ENCODE measurements at regions of chr18 and their contacts with region 1.

Region 1: GRCh38 chr18:35972197-35973052 is at the start of gene RMP24:
- DNase-seq: peak; percentile 85
- ATAC-seq: peak; percentile 94
- H3K4me3 Mint-ChIP-seq: peak within 1 kb of the TSS; percentile 98
- H3K27ac Mint-ChIP-seq: peak within 1 kb of the TSS; percentile 97
- H3K4me1 Mint-ChIP-seq: peaks cover 50% of the 10 kb centered on the region
- H3K27me3 Mint-ChIP-seq: no peaks in the 10 kb centered on the region
- CTCF ChIP-seq: no peak

Region 2: GRCh38 chr18:34976899-34977837 is 995.3 kb before region 1 on chr18:
- CTCF ChIA-PET with region 1: no interaction called
- POLR2A ChIA-PET with region 1: no interaction called
- intact Hi-C with region 1: loop called (anchors 5 kb)
- DNase-seq: peak; percentile 77
- ATAC-seq: peak; percentile 76
- H3K4me3 Mint-ChIP-seq: peak overlapping the region; percentile 89
- H3K27ac Mint-ChIP-seq: no peak overlapping the region
- H3K4me1 Mint-ChIP-seq: peaks cover 23% of the 10 kb centered on the region
- H3K27me3 Mint-ChIP-seq: peaks cover 18% of the 10 kb centered on the region
- CTCF ChIP-seq: no peak

Region 3: GRCh38 chr18:35290073-35290735 is 682.2 kb before region 1 on chr18 and contains the start of gene ZSCAN30:
- CTCF ChIA-PET with region 1: no interaction called
- POLR2A ChIA-PET with region 1: interaction called, 5 read pairs
- intact Hi-C with region 1: loop called (anchors 1 kb)
- DNase-seq: peak; percentile 92
- ATAC-seq: peak; percentile 97
- H3K4me3 Mint-ChIP-seq: peak within 1 kb of the TSS; percentile 100
- H3K27ac Mint-ChIP-seq: peak within 1 kb of the TSS; percentile 99
- H3K4me1 Mint-ChIP-seq: peaks cover 51% of the 10 kb centered on the region
- H3K27me3 Mint-ChIP-seq: peaks cover 2% of the 10 kb centered on the region
- CTCF ChIP-seq: no peak
- total RNA-seq, gene ZSCAN30: 21.2 and 23.8 TPM in 2 replicates

Region 4: DNA sequence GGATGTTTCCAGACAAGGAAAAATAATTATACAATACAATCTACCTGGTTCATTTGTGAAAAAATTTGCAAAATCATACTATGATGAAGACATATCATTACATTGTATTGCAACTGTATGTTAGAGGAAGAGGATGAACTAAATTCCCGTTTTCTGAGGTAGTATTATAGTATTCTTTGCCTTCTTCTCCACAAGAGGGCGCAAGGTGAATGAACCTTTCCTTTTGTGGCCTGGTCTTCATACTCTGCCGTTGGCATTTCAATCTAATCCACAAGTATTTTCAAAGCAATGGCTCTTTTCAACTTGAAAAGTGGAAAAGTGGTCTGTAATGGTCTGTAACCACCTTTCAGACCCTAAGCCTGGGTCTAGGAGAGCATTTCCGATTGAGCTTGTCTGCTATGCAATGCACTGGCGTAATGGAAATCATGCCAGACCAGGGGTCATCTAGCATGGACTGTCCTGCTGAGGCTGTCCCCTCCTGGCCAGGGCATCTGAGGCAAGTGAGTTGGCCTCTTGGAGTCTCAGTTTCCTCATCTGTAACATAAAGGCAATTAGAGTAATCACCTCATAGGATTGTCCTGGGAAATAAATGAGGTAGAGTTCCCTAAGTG is 564.4 kb before region 1 on chr18:
- CTCF ChIA-PET with region 1: no interaction called
- POLR2A ChIA-PET with region 1: no interaction called
- intact Hi-C with region 1: loop called (anchors 5 kb)
- DNase-seq: no peak
- ATAC-seq: peak; percentile 29
- H3K4me3 Mint-ChIP-seq: no peak overlapping the region
- H3K27ac Mint-ChIP-seq: no peak overlapping the region
- H3K4me1 Mint-ChIP-seq: peaks cover 44% of the 10 kb centered on the region
- H3K27me3 Mint-ChIP-seq: no peaks in the 10 kb centered on the region
- CTCF ChIP-seq: peak; percentile 67

Region 5: GRCh38 chr18:35949903-35950627 is 22.4 kb before region 1 on chr18:
- CTCF ChIA-PET with region 1: interaction called, 3 read pairs
- POLR2A ChIA-PET with region 1: no interaction called
- intact Hi-C with region 1: loop called (anchors 1 kb)
- DNase-seq: peak; percentile 43
- ATAC-seq: peak; percentile 85
- H3K4me3 Mint-ChIP-seq: peak overlapping the region; percentile 82
- H3K27ac Mint-ChIP-seq: no peak overlapping the region
- H3K4me1 Mint-ChIP-seq: peaks cover 8% of the 10 kb centered on the region
- H3K27me3 Mint-ChIP-seq: peaks cover 27% of the 10 kb centered on the region
- CTCF ChIP-seq: peak; percentile 98

Region 6: GRCh38 chr18:36828630-36829361 is 856.4 kb after region 1 on chr18 and contains the starts of genes KIAA1328 and TPGS2:
- CTCF ChIA-PET with region 1: no interaction called
- POLR2A ChIA-PET with region 1: interaction called, 6 read pairs
- intact Hi-C with region 1: loop called (anchors 1 kb)
- DNase-seq: peak; percentile 88
- ATAC-seq: peak; percentile 91
- H3K4me3 Mint-ChIP-seq: peak within 1 kb of the TSS; percentile 94
- H3K27ac Mint-ChIP-seq: peak within 1 kb of the TSS; percentile 84
- H3K4me1 Mint-ChIP-seq: peaks cover 31% of the 10 kb centered on the region
- H3K27me3 Mint-ChIP-seq: no peaks in the 10 kb centered on the region
- CTCF ChIP-seq: no peak
- total RNA-seq, gene KIAA1328: 11.7 and 12.9 TPM in 2 replicates
- total RNA-seq, gene TPGS2: 42.1 and 45.1 TPM in 2 replicates

Region 7: GRCh38 chr18:37276111-37276890 is 1303.9 kb after region 1 on chr18:
- CTCF ChIA-PET with region 1: no interaction called
- POLR2A ChIA-PET with region 1: no interaction called
- intact Hi-C with region 1: no loop called
- DNase-seq: no peak
- ATAC-seq: no peak
- H3K4me3 Mint-ChIP-seq: no peak overlapping the region
- H3K27ac Mint-ChIP-seq: no peak overlapping the region
- H3K4me1 Mint-ChIP-seq: no peaks in the 10 kb centered on the region
- H3K27me3 Mint-ChIP-seq: peaks cover 25% of the 10 kb centered on the region
- CTCF ChIP-seq: no peak